ENCODE measurements at regions of chr10 and their contacts with region 1.

Region 1: DNA sequence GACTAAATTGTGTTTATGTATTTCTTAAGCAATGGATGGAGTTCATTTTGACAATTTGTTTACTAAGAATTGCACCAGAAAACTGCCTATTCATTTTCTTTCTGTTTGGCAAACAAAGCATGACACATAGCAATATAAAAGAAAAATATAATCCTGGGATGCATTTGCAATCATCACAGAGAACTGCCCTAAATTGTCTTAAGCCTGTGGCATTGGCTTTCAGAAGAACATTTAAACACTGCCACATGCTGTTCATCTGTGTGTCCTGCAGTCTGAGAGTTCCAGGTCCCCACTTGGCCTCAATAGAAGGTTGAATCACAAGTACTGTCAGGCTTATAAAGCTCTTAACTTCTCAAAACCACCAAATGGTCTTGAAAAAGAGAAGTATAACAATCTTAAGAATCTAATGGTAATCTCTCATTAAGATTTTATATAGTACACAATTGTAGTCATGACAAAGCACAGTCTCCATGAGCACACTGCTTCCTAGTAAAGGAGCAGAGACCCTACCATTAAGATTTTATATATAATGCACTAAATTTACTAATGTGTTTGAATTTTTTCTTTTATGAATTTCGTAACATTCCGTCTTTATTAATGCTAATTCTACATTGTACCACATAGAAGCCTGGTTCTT is 29.9 kb downstream of the RNLS start:
- DNase-seq: peak in 13 of 14 experiments; percentile 2 to 76 (median 20)
- ATAC-seq: peak; percentile 97
- H3K4me3 ChIP-seq: no peak overlapping the region
- H3K4me3 Mint-ChIP-seq: no peak overlapping the region
- H3K27ac ChIP-seq: no peak overlapping the region
- H3K27ac Mint-ChIP-seq: no peak overlapping the region
- H3K4me1 ChIP-seq: no peaks in the 10 kb centered on the region
- H3K4me1 Mint-ChIP-seq: no peaks in the 10 kb centered on the region
- H3K27me3 ChIP-seq: no peaks in the 10 kb centered on the region
- H3K27me3 Mint-ChIP-seq: no peaks in the 10 kb centered on the region
- CTCF ChIP-seq: peak; percentile 78

Region 2: GRCh38 chr10:87531908-87532622 is 1021.2 kb before region 1 on chr10:
- CTCF ChIA-PET with region 1: no interaction called
- POLR2A ChIA-PET with region 1: no interaction called
- intact Hi-C with region 1: loop called (anchors 10 kb)
- DNase-seq: no peak
- ATAC-seq: no peak
- H3K4me3 ChIP-seq: no peak overlapping the region
- H3K4me3 Mint-ChIP-seq: no peak overlapping the region
- H3K27ac ChIP-seq: no peak overlapping the region
- H3K27ac Mint-ChIP-seq: no peak overlapping the region
- H3K4me1 ChIP-seq: no peaks in the 10 kb centered on the region
- H3K4me1 Mint-ChIP-seq: peaks cover 12% of the 10 kb centered on the region
- H3K27me3 ChIP-seq: no peaks in the 10 kb centered on the region
- H3K27me3 Mint-ChIP-seq: no peaks in the 10 kb centered on the region
- CTCF ChIP-seq: no peak

Region 3: GRCh38 chr10:87659571-87660483 is 893.4 kb before region 1 on chr10 and contains the start of gene PAPSS2:
- CTCF ChIA-PET with region 1: no interaction called
- POLR2A ChIA-PET with region 1: no interaction called
- intact Hi-C with region 1: loop called (anchors 1 to 2 kb)
- DNase-seq: peak in 6 of 14 experiments; percentile 1 to 40 (median 8)
- ATAC-seq: no peak
- H3K4me3 ChIP-seq: peak within 1 kb of the TSS; percentile 50
- H3K4me3 Mint-ChIP-seq: peak within 1 kb of the TSS; percentile 88
- H3K27ac ChIP-seq: no peak within 1 kb of the TSS
- H3K27ac Mint-ChIP-seq: no peak within 1 kb of the TSS
- H3K4me1 ChIP-seq: peaks cover 12% of the 10 kb centered on the region
- H3K4me1 Mint-ChIP-seq: peaks cover 6% of the 10 kb centered on the region
- H3K27me3 ChIP-seq: peaks cover 19 to 48% of the 10 kb centered on the region in 2 experiments
- H3K27me3 Mint-ChIP-seq: peaks cover 61% of the 10 kb centered on the region
- CTCF ChIP-seq: no peak
- total RNA-seq, gene PAPSS2: not detected

Region 4: DNA sequence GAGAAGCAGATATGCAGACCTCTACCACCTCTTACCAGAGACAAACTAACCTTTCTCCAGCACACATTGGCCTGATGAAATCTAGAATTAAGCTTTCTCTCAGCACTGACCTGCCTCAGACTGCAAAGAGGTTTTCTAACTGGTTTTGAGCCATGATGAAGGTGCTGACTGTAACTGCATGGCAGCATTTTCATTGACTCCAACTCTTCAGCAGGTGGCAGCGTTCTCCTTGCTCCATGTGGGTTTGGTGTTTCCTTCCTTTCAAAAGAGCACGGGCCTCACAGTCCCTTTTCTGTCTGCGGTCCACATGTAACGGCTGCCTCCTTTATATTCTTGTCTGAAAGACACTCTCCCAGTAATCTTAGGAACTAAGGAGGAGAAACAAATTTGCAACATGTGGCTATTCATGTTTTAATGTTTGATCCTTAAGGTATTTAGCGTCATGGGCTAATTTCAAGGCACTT is 702.5 kb before region 1 on chr10:
- CTCF ChIA-PET with region 1: interaction called, 6 read pairs
- POLR2A ChIA-PET with region 1: no interaction called
- intact Hi-C with region 1: loop called (anchors 1 to 2 kb)
- DNase-seq: peak; percentile 18 to 81 (median 39)
- ATAC-seq: peak; percentile 95
- H3K4me3 ChIP-seq: no peak overlapping the region
- H3K4me3 Mint-ChIP-seq: no peak overlapping the region
- H3K27ac ChIP-seq: no peak overlapping the region
- H3K27ac Mint-ChIP-seq: no peak overlapping the region
- H3K4me1 ChIP-seq: peaks cover 3% of the 10 kb centered on the region
- H3K4me1 Mint-ChIP-seq: peaks cover 17% of the 10 kb centered on the region
- H3K27me3 ChIP-seq: no peaks in the 10 kb centered on the region
- H3K27me3 Mint-ChIP-seq: no peaks in the 10 kb centered on the region
- CTCF ChIP-seq: peak; percentile 71

Region 5: GRCh38 chr10:88114368-88114767 is 438.9 kb before region 1 on chr10:
- CTCF ChIA-PET with region 1: no interaction called
- POLR2A ChIA-PET with region 1: no interaction called
- intact Hi-C with region 1: loop called in 1 of 2 experiments (anchors 5 kb)
- DNase-seq: peak in 7 of 14 experiments; percentile 4 to 64 (median 43)
- ATAC-seq: peak; percentile 62
- H3K4me3 ChIP-seq: no peak overlapping the region
- H3K4me3 Mint-ChIP-seq: no peak overlapping the region
- H3K27ac ChIP-seq: no peak overlapping the region
- H3K27ac Mint-ChIP-seq: no peak overlapping the region
- H3K4me1 ChIP-seq: peaks cover 35% of the 10 kb centered on the region
- H3K4me1 Mint-ChIP-seq: no peaks in the 10 kb centered on the region
- H3K27me3 ChIP-seq: no peaks in the 10 kb centered on the region
- H3K27me3 Mint-ChIP-seq: no peaks in the 10 kb centered on the region
- CTCF ChIP-seq: peak; percentile 50

Region 6: GRCh38 chr10:88386821-88387773 is 166.1 kb before region 1 on chr10:
- CTCF ChIA-PET with region 1: no interaction called
- POLR2A ChIA-PET with region 1: no interaction called
- intact Hi-C with region 1: loop called in 1 of 2 experiments (anchors 5 kb)
- DNase-seq: peak in 5 of 14 experiments; percentile 5 to 60 (median 52)
- ATAC-seq: peak; percentile 56
- H3K4me3 ChIP-seq: no peak overlapping the region
- H3K4me3 Mint-ChIP-seq: no peak overlapping the region
- H3K27ac ChIP-seq: peak overlapping the region; percentile 77 to 89
- H3K27ac Mint-ChIP-seq: no peak overlapping the region
- H3K4me1 ChIP-seq: peaks cover 45% of the 10 kb centered on the region
- H3K4me1 Mint-ChIP-seq: peaks cover 6% of the 10 kb centered on the region
- H3K27me3 ChIP-seq: no peaks in the 10 kb centered on the region
- H3K27me3 Mint-ChIP-seq: no peaks in the 10 kb centered on the region
- CTCF ChIP-seq: no peak

Region 7: DNA sequence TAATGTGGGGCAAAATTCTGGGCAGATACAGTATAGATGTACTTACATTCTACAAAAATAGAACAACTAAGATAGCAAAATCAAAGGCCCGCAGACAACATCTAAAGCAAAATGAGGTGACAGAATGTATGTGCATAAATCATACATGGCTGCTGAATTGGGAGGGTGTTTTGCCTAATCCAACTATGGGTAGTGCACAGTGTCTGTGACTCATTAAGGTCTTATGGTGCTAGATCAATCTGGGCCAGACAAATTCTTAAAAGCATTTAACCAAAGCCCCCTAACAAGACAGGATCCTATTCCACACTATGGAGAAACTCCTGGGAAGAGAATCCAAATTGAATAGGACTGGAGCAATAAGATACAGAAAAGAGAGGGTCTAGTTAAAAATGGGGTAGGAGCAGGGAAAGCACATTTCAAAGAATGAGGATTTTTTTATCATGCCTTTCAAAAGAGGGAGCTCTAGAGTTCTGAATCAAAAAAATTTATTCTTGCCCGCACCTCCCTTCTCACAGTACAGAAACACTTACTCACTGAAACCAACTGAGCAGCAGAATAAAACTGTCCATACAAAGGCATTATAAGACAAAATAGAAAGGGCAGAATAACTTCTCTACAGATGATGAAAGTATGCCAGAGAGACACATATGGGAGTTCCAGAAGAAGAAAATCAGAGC is 151.4 kb before region 1 on chr10:
- CTCF ChIA-PET with region 1: no interaction called
- POLR2A ChIA-PET with region 1: no interaction called
- intact Hi-C with region 1: loop called in 1 of 2 experiments (anchors 10 kb)
- DNase-seq: no peak
- ATAC-seq: no peak
- H3K4me3 ChIP-seq: no peak overlapping the region
- H3K4me3 Mint-ChIP-seq: no peak overlapping the region
- H3K27ac ChIP-seq: no peak overlapping the region
- H3K27ac Mint-ChIP-seq: no peak overlapping the region
- H3K4me1 ChIP-seq: no peaks in the 10 kb centered on the region
- H3K4me1 Mint-ChIP-seq: peaks cover 5% of the 10 kb centered on the region
- H3K27me3 ChIP-seq: no peaks in the 10 kb centered on the region
- H3K27me3 Mint-ChIP-seq: no peaks in the 10 kb centered on the region
- CTCF ChIP-seq: peak; percentile 32

Region 8: DNA sequence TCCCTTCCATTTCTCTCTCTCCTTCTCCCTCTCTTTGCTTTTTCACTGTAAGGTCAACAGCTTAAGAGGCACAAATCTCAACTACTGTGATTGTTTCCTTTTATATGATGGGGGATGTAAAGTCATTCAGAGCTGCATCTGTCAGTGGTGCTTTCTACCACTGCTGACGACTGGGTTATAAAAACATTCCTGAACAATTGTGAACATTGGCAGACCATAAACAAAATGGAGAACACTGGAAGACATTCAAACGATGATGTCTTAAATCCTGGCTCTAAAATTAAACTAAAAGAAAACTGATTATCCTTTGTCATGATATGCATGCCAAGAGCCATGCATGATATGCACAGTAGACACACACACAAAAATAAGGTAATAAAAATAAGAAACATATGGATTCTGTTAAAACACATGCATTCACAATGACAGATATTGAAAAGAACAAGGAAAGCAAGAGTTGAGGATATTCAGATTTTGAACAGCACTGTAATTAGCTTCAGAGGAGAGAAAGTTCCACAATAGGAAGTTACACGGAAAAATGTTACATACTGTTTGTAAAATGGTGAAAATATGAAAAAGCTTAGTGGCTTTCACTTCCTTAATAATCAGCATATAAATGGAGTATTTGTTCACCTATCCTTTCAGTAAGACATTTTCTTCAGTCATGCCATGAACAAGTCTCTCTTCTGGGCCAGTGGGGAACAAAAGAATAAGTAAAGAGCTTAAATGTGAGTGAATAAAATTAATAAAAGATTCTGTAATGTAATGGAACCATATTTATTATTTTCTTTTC is 59.3 kb before region 1 on chr10:
- CTCF ChIA-PET with region 1: no interaction called
- POLR2A ChIA-PET with region 1: no interaction called
- intact Hi-C with region 1: no loop called
- DNase-seq: no peak
- ATAC-seq: no peak
- H3K4me3 ChIP-seq: no peak overlapping the region
- H3K4me3 Mint-ChIP-seq: no peak overlapping the region
- H3K27ac ChIP-seq: no peak overlapping the region
- H3K27ac Mint-ChIP-seq: no peak overlapping the region
- H3K4me1 ChIP-seq: no peaks in the 10 kb centered on the region
- H3K4me1 Mint-ChIP-seq: peaks cover 38% of the 10 kb centered on the region
- H3K27me3 ChIP-seq: no peaks in the 10 kb centered on the region
- H3K27me3 Mint-ChIP-seq: no peaks in the 10 kb centered on the region
- CTCF ChIP-seq: no peak

Measured in CD4-positive, alpha-beta T cell (primary cell).